ENCODE measurements at regions of chr13 and their contacts with region 1.

Region 1: GRCh38 chr13:45892513-45892912 is 41.0 kb upstream of the SIAH3 start:
- DNase-seq: no peak
- H3K4me3 ChIP-seq: no peak overlapping the region
- H3K27ac ChIP-seq: no peak overlapping the region
- H3K4me1 ChIP-seq: no peaks in the 10 kb centered on the region
- H3K27me3 ChIP-seq: peaks cover 86% of the 10 kb centered on the region
- CTCF ChIP-seq: no peak

Region 2: DNA sequence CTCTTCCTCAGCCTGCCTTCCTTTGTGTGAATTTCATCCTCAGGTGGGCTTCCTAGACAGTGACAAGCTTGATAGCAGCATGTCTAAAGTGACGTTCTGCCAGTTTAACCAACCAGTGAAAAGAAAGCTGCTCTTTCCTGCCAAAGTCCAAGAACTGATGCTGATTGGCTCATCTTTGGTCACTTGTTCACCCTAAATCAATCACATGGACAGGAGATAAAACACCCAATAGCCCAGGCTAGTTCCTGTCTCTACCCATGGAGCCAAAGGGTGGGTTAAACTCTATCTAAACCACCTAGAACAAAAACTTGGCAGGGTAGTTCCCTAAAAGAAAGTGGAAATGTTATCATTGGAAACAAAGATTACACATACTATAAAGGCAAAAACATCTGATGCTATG is 852.3 kb before region 1 on chr13:
- CTCF ChIA-PET with region 1: no interaction called
- POLR2A ChIA-PET with region 1: interaction called, 10 read pairs
- intact Hi-C with region 1: no loop called
- DNase-seq: no peak
- H3K4me3 ChIP-seq: no peak overlapping the region
- H3K27ac ChIP-seq: no peak overlapping the region
- H3K4me1 ChIP-seq: no peaks in the 10 kb centered on the region
- H3K27me3 ChIP-seq: no peaks in the 10 kb centered on the region
- CTCF ChIP-seq: no peak

Region 3: DNA sequence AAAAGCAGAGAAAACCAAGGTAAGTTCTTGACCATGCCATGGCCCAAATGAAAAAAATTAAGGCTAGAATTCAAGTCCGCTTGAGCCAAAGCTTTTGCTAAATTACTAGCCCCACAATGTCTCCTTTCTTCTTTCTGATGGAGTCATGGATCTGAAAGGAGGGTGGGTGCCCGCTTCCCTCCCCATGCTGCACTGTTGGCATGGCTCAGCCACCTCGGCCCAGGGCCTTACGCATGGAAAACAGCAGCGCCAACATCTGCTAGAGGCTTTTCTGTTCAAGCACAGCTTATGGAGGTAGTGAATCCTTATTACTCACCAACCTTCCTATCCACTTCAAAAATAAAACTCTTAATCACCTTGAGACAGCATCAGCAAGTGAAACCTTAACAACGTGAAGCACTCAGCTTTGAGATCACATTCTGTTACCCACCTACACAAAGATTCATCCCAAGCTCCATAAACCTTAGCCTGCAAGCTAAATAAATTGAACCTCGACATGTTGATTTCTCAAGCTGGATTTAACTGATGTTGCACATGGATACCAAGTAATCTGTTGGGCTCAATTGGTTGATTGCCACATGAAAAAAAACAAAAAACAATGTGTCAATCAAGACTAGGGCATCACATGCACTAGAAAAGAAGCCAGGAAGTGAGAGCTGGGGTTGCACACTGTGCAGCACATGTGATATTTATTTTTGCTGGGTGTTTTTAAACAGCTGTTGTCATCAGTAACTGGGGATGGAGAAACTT is 594.9 kb before region 1 on chr13:
- CTCF ChIA-PET with region 1: no interaction called
- POLR2A ChIA-PET with region 1: no interaction called
- intact Hi-C with region 1: no loop called
- DNase-seq: no peak
- H3K4me3 ChIP-seq: no peak overlapping the region
- H3K27ac ChIP-seq: no peak overlapping the region
- H3K4me1 ChIP-seq: peaks cover 8% of the 10 kb centered on the region
- H3K27me3 ChIP-seq: no peaks in the 10 kb centered on the region
- CTCF ChIP-seq: no peak